PC-3 (cell line): ENCODE measurements at regions of chr20 and their contacts with region 1.

Region 1: GRCh38 chr20:16801919-16802911 is 54.1 kb downstream of the OTOR start:
- DNase-seq: peak; percentile 85
- ATAC-seq: peak; percentile 66
- H3K4me3 ChIP-seq: no peak overlapping the region
- H3K27ac ChIP-seq: no peak overlapping the region
- H3K4me1 ChIP-seq: no peaks in the 10 kb centered on the region
- H3K27me3 ChIP-seq: peaks cover 80% of the 10 kb centered on the region
- CTCF ChIP-seq: peak; percentile 93

Region 2: DNA sequence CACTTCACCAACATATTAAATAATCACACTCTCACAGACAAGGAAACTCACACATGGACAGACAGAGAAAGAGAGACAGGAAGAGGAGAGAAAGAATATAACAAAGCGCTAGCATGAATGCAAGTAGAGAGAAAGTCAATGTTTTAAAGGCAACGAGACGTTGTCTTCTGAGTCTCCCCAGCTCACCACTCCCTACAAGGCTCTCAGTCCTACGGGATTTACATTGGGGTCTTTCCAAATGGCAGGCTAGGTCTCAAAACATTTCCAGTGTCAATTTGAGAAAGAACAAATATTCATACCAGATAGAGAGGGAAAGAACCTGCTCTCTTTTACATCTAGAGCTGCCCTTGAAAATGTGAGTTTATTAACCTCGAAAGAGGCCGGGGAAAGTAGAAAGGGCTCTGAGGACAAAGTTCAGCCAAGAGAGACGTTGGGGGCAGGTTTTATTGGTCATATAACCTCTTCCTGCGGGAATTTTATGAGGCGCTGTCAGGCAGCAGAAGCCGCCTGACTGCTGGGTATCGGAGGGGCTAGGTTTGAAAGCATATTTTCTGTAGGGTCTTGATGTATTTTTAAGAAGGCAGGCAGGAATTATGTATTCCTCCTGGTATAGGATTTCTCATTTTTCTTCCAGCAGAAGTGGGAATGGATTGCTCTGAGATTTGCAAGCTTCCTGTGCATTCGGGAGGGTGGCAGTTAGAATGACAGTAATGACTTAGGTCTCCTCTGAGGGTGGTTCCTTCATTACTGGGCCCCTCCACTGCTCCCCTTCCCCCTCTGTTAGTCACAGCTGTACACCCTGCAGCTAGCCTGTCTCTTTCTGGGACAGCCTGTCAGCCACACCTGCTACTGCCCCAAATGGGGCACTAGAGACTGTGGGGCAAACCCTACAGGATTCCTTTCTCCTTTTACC is 194.6 kb before region 1 on chr20:
- CTCF ChIA-PET with region 1: no interaction called
- POLR2A ChIA-PET with region 1: no interaction called
- intact Hi-C with region 1: no loop called
- DNase-seq: peak; percentile 20
- ATAC-seq: peak; percentile 35
- H3K4me3 ChIP-seq: 0 out of 2 replicates have a peak overlapping the region, but pooled peaks have one; percentile 11
- H3K27ac ChIP-seq: no peak overlapping the region
- H3K4me1 ChIP-seq: peaks cover 22% of the 10 kb centered on the region
- H3K27me3 ChIP-seq: peaks cover 11% of the 10 kb centered on the region; the same call in 1 of the 2 replicates
- CTCF ChIP-seq: no peak

Region 3: DNA sequence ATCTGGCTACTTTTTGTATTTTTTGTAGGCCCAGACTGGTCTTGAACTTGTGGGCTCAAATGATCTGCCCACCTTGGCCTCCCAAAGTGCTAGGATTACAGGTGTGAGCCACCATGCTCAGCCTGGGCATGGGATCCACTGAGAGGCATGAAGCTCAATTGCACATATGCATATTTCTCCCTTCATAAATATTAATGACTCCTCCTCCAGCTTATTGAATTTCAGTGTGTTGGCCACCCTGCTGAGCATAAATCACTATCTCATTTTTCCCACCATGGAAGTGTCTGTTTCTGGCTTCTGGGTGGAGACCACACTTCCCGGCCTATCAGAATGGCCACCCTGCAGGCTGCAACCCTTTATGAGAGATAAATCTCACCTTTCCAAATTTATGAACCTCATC is 175.4 kb before region 1 on chr20:
- CTCF ChIA-PET with region 1: no interaction called
- POLR2A ChIA-PET with region 1: interaction called, 10 read pairs
- intact Hi-C with region 1: no loop called
- DNase-seq: no peak
- ATAC-seq: no peak
- H3K4me3 ChIP-seq: no peak overlapping the region
- H3K27ac ChIP-seq: no peak overlapping the region
- H3K4me1 ChIP-seq: no peaks in the 10 kb centered on the region
- H3K27me3 ChIP-seq: 0 out of 2 replicates have a peak, but pooled peaks cover 5% of the 10 kb centered on the region
- CTCF ChIP-seq: no peak

Region 4: DNA sequence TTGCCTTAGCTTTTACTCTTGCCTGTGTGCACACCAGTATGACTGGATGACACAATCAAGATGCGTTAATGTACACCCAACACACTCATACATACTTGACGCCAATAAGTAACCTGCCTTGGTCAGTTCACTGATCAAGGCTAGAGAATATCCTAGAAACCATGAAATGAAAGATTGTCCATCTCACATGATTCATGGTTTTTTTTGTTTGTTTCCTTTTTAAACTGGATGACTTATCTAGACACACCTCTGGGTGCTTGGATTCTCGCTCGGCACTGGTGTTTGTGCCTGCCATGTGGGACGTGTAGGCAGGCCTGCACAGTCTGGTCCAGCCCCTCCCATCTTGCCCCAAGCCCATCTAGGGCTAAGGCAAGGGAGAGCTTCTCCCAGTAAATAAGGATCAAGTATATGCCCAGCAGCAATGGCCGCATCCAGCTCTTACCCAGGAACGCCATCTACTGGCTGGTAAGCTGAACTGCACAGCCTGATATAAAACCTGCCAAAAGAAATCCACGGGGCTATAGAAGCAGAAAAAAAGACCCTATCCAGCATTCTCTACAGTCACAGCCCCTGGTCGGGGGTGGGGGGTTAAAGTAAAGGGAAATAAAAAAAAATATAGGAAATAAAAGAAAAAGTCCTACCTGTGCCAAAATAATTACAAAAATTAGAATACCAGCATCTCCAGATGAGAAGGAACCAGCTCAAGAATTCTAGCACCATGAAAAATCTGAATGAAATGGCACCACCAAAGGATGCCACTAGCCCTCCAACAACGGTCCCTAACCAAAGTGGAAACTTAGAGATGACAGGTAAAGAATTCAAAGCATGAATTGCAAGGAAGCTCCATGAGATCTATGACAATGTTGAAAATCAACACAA is 19.2 kb after region 1 on chr20:
- CTCF ChIA-PET with region 1: interaction called, 22 read pairs
- POLR2A ChIA-PET with region 1: no interaction called
- intact Hi-C with region 1: loop called (anchors 1 kb)
- DNase-seq: peak; percentile 69
- ATAC-seq: peak; percentile 57
- H3K4me3 ChIP-seq: no peak overlapping the region
- H3K27ac ChIP-seq: no peak overlapping the region
- H3K4me1 ChIP-seq: peaks cover 14% of the 10 kb centered on the region
- H3K27me3 ChIP-seq: peaks cover 32% of the 10 kb centered on the region; the same call in 1 of the 2 replicates
- CTCF ChIP-seq: peak; percentile 95

Region 5: DNA sequence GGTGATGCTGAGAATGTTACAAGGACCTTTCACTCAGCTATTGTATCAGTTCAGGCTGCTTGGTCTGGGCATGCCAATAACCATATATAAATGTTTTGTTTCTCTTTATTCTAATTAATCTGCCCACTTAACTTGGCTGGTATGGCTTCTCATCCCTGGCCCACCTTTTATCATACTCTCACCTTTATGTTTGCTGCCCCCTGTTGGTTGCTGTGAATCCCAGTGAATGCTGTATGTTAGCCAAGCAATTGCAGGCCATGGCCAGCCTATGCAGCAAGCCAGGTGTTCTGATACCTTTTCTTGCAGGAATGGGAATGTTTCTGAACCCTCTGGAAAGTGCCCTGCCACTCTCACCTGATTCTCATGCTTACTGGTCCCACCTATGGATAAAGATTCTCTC is 479.3 kb after region 1 on chr20:
- CTCF ChIA-PET with region 1: no interaction called
- POLR2A ChIA-PET with region 1: no interaction called
- intact Hi-C with region 1: loop called (anchors 10 kb)
- DNase-seq: peak; percentile 62
- ATAC-seq: no peak
- H3K4me3 ChIP-seq: no peak overlapping the region
- H3K27ac ChIP-seq: no peak overlapping the region
- H3K4me1 ChIP-seq: no peaks in the 10 kb centered on the region
- H3K27me3 ChIP-seq: peaks cover 43% of the 10 kb centered on the region
- CTCF ChIP-seq: peak; percentile 73

Region 6: GRCh38 chr20:17431621-17432364 is 629.6 kb after region 1 on chr20:
- CTCF ChIA-PET with region 1: interaction called, 9 read pairs
- POLR2A ChIA-PET with region 1: interaction called, 3 read pairs
- intact Hi-C with region 1: loop called (anchors 1 kb)
- DNase-seq: peak; percentile 70
- ATAC-seq: peak; percentile 61
- H3K4me3 ChIP-seq: no peak overlapping the region
- H3K27ac ChIP-seq: no peak overlapping the region
- H3K4me1 ChIP-seq: no peaks in the 10 kb centered on the region
- H3K27me3 ChIP-seq: peaks cover 83% of the 10 kb centered on the region
- CTCF ChIP-seq: peak; percentile 99